Esophagus muscularis mucosa (tissue), 4 donors: ENCODE measurements at regions of chrX and their contacts with region 1.

Region 1: DNA sequence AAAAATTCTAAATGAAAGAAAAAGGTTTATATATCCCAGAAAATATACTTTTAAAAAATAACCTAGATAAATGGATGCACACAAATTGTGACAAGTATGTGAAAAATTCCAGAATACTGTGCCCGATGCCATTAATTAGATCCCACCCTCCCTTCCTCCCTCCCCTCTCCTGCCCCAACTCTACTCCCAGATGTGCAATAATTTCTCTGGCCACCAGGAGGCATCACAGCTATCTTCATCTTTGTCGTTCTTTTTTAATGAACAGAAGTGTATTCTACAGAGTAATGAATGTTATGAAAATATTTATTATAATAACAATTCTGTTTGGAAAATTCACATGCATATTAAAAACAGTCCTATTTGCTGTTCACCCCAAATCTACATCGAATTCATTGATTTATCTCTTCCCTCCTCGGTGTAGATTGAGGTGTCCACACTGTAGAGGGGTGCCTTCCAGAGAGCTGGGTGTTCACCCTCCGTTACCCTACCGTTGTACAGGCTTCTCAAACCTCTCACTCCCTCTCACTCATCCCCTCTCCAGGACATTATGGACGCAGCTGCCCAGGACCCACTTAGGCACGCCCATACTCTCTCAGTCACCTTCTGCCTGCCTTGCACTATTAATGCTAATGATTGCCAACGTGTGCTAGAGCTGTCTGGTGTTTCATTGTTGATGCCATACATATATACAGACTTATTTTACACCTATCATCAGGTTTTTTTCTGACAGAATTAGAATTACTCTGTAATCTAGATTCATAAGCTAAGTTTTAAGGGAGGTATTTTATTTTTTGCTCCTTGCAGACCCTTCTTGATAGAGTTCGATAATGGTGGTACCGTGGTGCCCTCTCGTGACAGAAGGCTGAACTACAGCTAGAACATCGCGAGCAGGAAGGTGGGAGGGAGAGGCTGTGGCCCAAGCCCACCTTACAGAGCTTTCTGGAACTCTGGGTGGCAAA is 14.1 kb downstream of the RAB40AL start:
- DNase-seq: no peak
- H3K4me3 ChIP-seq: peak overlapping the region in 3 of 4 donors; percentile 11 to 27 (median 14)
- H3K27ac ChIP-seq: no peak overlapping the region
- H3K4me1 ChIP-seq: no peaks in the 10 kb centered on the region
- H3K27me3 ChIP-seq: no peaks in the 10 kb centered on the region
- CTCF ChIP-seq: peak; percentile 58 to 64 (median 61)
- EP300 ChIP-seq: no peak
- POLR2A ChIP-seq: no peak

Region 2: DNA sequence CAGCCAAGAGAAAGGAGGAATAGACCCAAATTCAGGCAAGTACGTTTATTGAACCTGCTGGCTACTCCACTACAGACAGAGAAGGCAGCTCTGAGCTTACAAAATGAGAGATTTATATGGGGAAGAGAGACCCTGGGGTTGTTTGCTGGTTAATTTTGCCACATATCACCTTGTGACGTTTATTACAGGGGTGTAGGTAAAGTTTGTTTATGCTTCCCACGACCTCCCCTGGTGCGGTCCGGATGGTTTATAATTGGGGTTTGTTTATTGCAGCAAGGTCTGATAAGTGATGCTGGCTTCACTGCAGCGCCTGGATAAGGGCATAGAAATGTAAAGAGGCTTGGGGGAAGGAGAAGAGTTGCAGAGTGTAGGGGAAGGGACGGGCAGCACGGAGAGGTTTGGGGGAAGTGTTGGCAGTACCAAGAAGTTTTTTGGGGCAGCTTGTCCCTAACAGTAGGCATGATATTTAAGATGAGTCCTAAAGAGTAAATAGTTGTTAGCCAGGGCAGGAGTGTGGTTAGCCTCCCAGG is 100.1 kb after region 1 on chrX:
- intact Hi-C with region 1: no loop called
- DNase-seq: no peak
- H3K4me3 ChIP-seq: no peak overlapping the region
- H3K27ac ChIP-seq: no peak overlapping the region
- H3K4me1 ChIP-seq: no peaks in the 10 kb centered on the region
- H3K27me3 ChIP-seq: no peaks in the 10 kb centered on the region
- CTCF ChIP-seq: no peak
- EP300 ChIP-seq: no peak
- POLR2A ChIP-seq: no peak

Region 3: DNA sequence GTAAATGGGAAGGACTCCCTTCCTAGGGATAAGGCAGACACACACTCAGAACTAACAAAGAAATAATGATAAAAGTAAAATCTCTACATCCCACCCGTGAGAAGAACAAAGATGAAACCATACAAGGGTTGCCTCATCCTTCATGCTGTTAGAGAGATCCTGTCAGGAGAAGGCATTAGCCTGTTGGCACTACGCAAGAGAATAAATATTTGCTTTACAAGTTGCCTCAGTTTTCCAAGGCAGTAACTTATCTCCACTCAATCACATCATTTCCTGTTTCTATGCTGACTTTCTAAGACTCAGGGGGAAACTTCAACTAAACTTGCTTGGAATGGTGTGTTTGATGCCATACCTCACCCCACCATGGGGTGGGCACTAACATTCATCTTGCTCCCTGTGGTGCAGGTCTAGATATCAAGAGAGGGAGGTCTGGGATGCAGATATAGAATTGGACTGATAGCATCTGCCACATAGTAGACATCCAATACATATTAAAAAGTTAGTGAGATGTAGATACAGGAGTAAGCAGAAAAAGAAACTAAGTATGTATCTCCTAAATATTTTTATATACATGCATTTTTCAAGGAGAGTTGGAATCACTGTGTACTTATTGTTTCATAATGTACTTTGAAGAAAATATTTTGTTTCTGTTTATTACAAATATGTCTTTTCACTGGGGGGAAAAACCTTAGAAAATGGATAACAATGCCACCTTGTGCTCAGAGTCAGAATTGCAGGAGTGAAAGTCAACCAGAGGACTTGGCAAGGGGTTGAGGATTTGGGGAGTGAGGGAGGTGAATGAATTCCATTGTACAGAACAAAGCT is 206.5 kb after region 1 on chrX:
- intact Hi-C with region 1: loop called (anchors 5 kb)
- DNase-seq: no peak
- H3K4me3 ChIP-seq: no peak overlapping the region
- H3K27ac ChIP-seq: no peak overlapping the region
- H3K4me1 ChIP-seq: peaks cover 0 to under 1% (median 0%) of the 10 kb centered on the region in 4 donors
- H3K27me3 ChIP-seq: no peaks in the 10 kb centered on the region
- CTCF ChIP-seq: peak; percentile 46 to 59 (median 52)
- EP300 ChIP-seq: no peak
- POLR2A ChIP-seq: no peak

Region 4: DNA sequence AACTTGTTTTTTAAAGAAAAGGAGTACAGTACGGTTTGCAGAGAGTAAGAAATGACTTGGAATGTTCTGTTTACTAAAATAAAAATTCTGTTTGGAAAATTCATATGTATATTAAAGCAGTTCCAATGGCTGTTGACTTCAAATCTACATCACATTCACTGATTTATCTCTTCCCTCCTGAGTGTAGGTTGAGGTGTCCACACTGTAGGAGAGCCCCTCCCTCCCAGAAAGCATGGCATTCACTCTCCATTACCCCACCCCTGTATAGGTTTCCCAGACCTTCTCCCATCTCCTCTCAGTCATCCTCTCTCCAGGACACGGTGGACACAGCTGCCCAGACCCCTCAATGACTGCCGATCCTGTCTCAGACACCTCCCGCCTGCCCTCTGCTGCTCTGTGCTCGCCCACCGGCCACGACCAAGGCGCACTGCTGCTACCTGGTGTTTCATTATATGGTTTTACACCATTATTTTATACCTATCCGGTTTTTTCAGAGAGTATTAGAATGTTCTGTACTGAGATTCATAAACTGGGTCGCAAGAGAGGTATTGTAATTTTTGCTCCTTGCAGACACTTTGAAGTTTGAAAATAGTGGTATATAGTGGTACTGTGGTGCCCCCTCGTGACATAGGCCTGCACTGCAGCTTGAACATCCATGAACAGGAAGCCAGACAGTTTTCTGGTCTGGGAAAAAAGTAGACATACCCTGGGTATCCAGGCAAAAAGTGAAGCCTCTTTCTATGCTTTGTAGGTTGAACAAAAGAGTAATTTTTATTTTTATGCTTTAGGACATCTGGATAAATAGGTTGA is 225.0 kb after region 1 on chrX:
- intact Hi-C with region 1: loop called (anchors 2 kb)
- DNase-seq: no peak
- H3K4me3 ChIP-seq: peak overlapping the region in 1 of 4 donors; percentile 24
- H3K27ac ChIP-seq: no peak overlapping the region
- H3K4me1 ChIP-seq: peaks cover 0 to 3% (median 2%) of the 10 kb centered on the region in 4 donors
- H3K27me3 ChIP-seq: peaks cover 0 to 13% (median 0%) of the 10 kb centered on the region in 4 donors
- CTCF ChIP-seq: peak; percentile 61 to 69 (median 64)
- EP300 ChIP-seq: no peak
- POLR2A ChIP-seq: no peak